ENCODE measurements at regions of chr11 and their contacts with region 1.

Region 1: GRCh38 chr11:64304316-64305072 is 830 bp upstream of the ESRRA start:
- DNase-seq: peak; percentile 95
- H3K4me3 Mint-ChIP-seq: peak overlapping the region; percentile 82
- H3K27ac Mint-ChIP-seq: peak overlapping the region; percentile 98
- H3K4me1 Mint-ChIP-seq: peaks cover 44% of the 10 kb centered on the region
- H3K27me3 Mint-ChIP-seq: peaks cover 18% of the 10 kb centered on the region

Region 2: GRCh38 chr11:64225612-64226506 is 78.6 kb before region 1 on chr11 and contains the starts of genes NUDT22 and TRPT1:
- CTCF ChIA-PET with region 1: interaction called, 13 read pairs
- POLR2A ChIA-PET with region 1: interaction called, 3 read pairs
- DNase-seq: peak; percentile 94
- H3K4me3 Mint-ChIP-seq: peak within 1 kb of the TSS; percentile 86
- H3K27ac Mint-ChIP-seq: peak within 1 kb of the TSS; percentile 90
- H3K4me1 Mint-ChIP-seq: peaks cover 38% of the 10 kb centered on the region
- H3K27me3 Mint-ChIP-seq: no peaks in the 10 kb centered on the region
- total RNA-seq, gene NUDT22: 70.2 to 82.1 TPM
- total RNA-seq, gene TRPT1: 20.0 to 26.5 TPM

Region 3: GRCh38 chr11:64269380-64270234 is 34.9 kb before region 1 on chr11:
- CTCF ChIA-PET with region 1: interaction called, 25 read pairs
- POLR2A ChIA-PET with region 1: interaction called, 3 read pairs
- DNase-seq: peak; percentile 97
- H3K4me3 Mint-ChIP-seq: peak overlapping the region; percentile 88
- H3K27ac Mint-ChIP-seq: peak overlapping the region; percentile 92
- H3K4me1 Mint-ChIP-seq: peaks cover 26% of the 10 kb centered on the region
- H3K27me3 Mint-ChIP-seq: no peaks in the 10 kb centered on the region

Region 4: DNA sequence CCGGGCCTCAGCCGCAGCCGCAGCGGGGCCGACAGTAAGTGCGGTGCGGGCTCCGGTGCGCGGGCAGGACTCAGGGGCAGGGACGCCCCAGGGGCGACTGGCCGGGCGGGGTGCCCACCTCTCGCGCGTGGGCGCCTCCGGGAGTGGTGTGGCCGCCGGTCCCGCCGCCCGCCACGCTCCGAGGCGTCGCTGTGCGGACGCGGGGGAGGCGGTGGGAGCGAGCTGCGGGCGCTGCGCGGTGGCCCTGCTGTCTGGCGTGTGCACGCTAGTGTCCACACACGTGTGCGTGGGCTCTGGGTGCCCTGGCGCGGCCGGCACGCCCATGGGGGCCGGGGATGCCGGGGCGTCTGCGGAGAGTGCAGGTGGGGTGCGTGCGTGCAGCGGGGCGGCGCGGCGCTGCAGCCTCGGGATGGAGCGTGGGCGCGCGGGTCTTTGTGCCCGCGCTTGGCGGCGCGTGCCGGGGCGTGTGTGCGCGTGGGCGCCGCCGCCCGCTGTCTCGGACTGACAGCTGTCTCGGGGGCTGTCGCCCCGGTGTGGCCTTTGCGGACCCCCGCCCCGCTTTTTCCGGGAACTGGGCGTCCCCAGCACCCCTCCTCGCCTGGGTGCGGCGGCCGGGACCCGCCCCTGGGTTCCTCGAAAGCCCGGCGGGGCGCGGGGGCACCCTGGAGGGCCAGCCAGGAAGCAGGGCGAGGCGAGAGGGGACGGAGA is 12.6 kb before region 1 on chr11:
- CTCF ChIA-PET with region 1: interaction called, 92 read pairs
- POLR2A ChIA-PET with region 1: no interaction called
- DNase-seq: no peak
- H3K4me3 Mint-ChIP-seq: no peak overlapping the region
- H3K27ac Mint-ChIP-seq: no peak overlapping the region
- H3K4me1 Mint-ChIP-seq: peaks cover 13% of the 10 kb centered on the region
- H3K27me3 Mint-ChIP-seq: peaks cover 56% of the 10 kb centered on the region

Region 5: GRCh38 chr11:64331557-64332371 is 27.3 kb after region 1 on chr11:
- CTCF ChIA-PET with region 1: interaction called, 11 read pairs
- POLR2A ChIA-PET with region 1: no interaction called
- DNase-seq: peak; percentile 76
- H3K4me3 Mint-ChIP-seq: no peak overlapping the region
- H3K27ac Mint-ChIP-seq: peak overlapping the region; percentile 78
- H3K4me1 Mint-ChIP-seq: peaks cover 26% of the 10 kb centered on the region
- H3K27me3 Mint-ChIP-seq: no peaks in the 10 kb centered on the region

Region 6: GRCh38 chr11:64448599-64449556 is 144.4 kb after region 1 on chr11:
- CTCF ChIA-PET with region 1: no interaction called
- POLR2A ChIA-PET with region 1: no interaction called
- DNase-seq: peak; percentile 73
- H3K4me3 Mint-ChIP-seq: peak overlapping the region; percentile 51
- H3K27ac Mint-ChIP-seq: no peak overlapping the region
- H3K4me1 Mint-ChIP-seq: peaks cover 16% of the 10 kb centered on the region
- H3K27me3 Mint-ChIP-seq: peaks cover 23% of the 10 kb centered on the region